ENCODE measurements at regions of chr1 and their contacts with region 1.

Region 1: GRCh38 chr1:94463765-94464330 is 45.7 kb downstream of the ABCD3 start:
- DNase-seq: no peak
- H3K4me3 Mint-ChIP-seq: no peak overlapping the region
- H3K27ac Mint-ChIP-seq: no peak overlapping the region
- H3K4me1 Mint-ChIP-seq: peaks cover 7% of the 10 kb centered on the region
- H3K27me3 Mint-ChIP-seq: no peaks in the 10 kb centered on the region

Region 2: DNA sequence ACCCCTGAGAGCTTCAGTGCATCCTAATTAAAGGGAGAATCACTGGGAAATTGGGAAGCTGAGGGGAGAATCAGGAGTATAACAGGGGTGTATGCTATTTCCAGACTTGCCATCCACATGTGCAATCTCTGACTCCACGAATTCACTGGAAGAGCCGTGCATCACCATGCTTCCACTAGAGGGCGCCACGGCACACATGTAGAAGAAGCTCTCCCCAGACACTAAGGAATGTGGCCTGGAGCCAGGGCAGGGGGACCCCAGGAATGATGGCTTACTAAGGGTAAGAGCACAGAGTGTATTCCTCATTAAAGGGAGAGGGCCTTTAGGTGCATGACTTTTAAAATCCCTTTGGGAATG is 424.4 kb before region 1 on chr1:
- intact Hi-C with region 1: loop called (anchors 5 kb)
- DNase-seq: peak; percentile 24
- H3K4me3 Mint-ChIP-seq: no peak overlapping the region
- H3K27ac Mint-ChIP-seq: no peak overlapping the region
- H3K4me1 Mint-ChIP-seq: peaks cover 9% of the 10 kb centered on the region
- H3K27me3 Mint-ChIP-seq: peaks cover 18% of the 10 kb centered on the region

Region 3: GRCh38 chr1:94061513-94062443 is 402.1 kb before region 1 on chr1:
- intact Hi-C with region 1: loop called (anchors 2 kb)
- DNase-seq: no peak
- H3K4me3 Mint-ChIP-seq: no peak overlapping the region
- H3K27ac Mint-ChIP-seq: no peak overlapping the region
- H3K4me1 Mint-ChIP-seq: no peaks in the 10 kb centered on the region
- H3K27me3 Mint-ChIP-seq: peaks cover 15% of the 10 kb centered on the region

Region 4: DNA sequence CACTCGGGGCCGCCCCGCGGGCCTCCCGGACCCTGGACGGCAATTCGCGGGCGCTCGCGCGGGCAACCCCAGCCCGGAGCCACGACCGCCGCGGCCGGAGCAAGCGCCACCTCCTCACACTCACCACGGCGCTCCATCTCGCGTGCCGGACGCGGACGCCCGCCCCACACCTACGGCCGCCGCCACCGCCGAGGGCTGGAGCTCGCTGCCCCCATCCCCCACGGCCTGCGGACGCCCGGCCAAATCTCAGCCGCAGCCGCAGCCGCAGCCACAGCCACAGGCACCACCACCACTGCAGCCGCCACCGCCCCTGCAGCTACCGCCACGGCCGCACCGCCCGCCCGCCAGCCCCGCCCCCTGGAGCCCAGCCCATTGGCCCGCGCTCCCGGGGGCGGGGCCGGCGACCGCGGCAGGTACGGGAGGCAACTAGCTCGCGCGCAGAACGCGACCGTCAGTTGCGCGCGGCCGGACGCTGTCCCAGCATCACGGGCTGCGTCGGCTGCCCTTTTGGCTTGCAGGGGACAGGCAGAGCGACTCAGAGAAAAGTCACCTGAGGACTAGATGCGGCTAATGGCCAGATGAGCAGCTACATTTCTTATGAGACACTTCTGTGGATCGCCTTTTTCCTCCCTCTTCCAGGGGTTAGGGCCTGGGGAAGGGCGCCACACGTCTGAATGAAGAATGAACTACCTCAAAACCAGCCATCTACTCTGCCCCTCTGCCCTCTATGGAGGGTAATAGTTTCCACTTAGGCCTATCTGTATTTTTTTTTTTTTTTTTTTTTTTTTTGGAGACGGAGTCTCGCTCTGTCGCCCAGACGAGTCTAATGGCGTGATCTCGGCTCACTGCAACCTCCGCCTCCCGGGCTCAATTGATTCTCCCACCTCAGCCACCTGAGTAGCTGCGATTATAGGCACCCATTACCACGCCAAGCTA is 226.3 kb before region 1 on chr1 and contains the start of gene ARHGAP29:
- intact Hi-C with region 1: loop called (anchors 5 kb)
- DNase-seq: peak; percentile 40
- H3K4me3 Mint-ChIP-seq: peak within 1 kb of the TSS; percentile 62
- H3K27ac Mint-ChIP-seq: no peak within 1 kb of the TSS
- H3K4me1 Mint-ChIP-seq: peaks cover 15% of the 10 kb centered on the region
- H3K27me3 Mint-ChIP-seq: peaks cover 77% of the 10 kb centered on the region
- total RNA-seq, gene ARHGAP29: 0.05 and 0.18 TPM in 2 replicates

Region 5: DNA sequence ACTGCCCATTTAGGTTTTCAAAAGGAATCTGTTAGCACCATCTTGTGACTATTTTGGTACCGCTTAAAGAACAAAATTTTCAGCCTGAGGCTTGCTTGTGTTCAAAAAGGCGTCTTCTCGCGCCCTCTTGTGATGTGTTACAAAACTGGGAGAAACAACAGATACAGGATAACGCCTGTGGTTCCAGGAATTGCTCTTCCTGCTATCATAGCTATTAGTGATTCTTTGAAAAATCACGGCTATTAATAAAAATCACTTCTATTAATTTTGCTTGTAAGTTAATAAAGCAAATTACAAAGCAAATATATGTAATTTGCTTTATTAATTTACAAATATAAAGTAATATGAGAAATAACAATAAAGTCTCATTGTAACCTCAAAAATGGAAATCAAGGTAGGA is 127.9 kb before region 1 on chr1:
- intact Hi-C with region 1: loop called (anchors 5 kb)
- DNase-seq: no peak
- H3K4me3 Mint-ChIP-seq: no peak overlapping the region
- H3K27ac Mint-ChIP-seq: no peak overlapping the region
- H3K4me1 Mint-ChIP-seq: peaks cover 2% of the 10 kb centered on the region
- H3K27me3 Mint-ChIP-seq: peaks cover 3% of the 10 kb centered on the region

Measured in activated T-helper 2 cell treated with anti-CD3 and anti-CD28 coated beads, Interferon-gamma antibody, Interleukin-2, Interleukin-4, amounts not matched to agents 10 μg/mL and 5 μg/mL and 100 μg/mL, durations not matched to agents 14 hours and 24 hours and 36 hours (primary cell).